Breast epithelium (tissue), 4 donors: ENCODE measurements at regions of chr4 and their contacts with region 1.

Region 1: GRCh38 chr4:144562019-144562705 is 83.8 kb upstream of the HHIP start:
- DNase-seq: no peak
- H3K4me3 ChIP-seq: no peak overlapping the region
- H3K27ac ChIP-seq: no peak overlapping the region
- H3K4me1 ChIP-seq: no peaks in the 10 kb centered on the region
- H3K27me3 ChIP-seq: no peaks in the 10 kb centered on the region
- CTCF ChIP-seq: no peak
- POLR2A ChIP-seq: no peak

Region 2: GRCh38 chr4:143035661-143036060 is 1526.5 kb before region 1 on chr4:
- intact Hi-C with region 1: loop called (anchors 10 kb)
- DNase-seq: no peak
- H3K4me3 ChIP-seq: no peak overlapping the region
- H3K27ac ChIP-seq: no peak overlapping the region
- H3K4me1 ChIP-seq: no peaks in the 10 kb centered on the region
- H3K27me3 ChIP-seq: no peaks in the 10 kb centered on the region
- CTCF ChIP-seq: no peak
- POLR2A ChIP-seq: no peak

Region 3: GRCh38 chr4:144518181-144518902 is 43.8 kb before region 1 on chr4:
- intact Hi-C with region 1: loop called (anchors 2 kb)
- DNase-seq: no peak
- H3K4me3 ChIP-seq: no peak overlapping the region
- H3K27ac ChIP-seq: no peak overlapping the region
- H3K4me1 ChIP-seq: no peaks in the 10 kb centered on the region
- H3K27me3 ChIP-seq: no peaks in the 10 kb centered on the region
- CTCF ChIP-seq: no peak
- POLR2A ChIP-seq: no peak

Region 4: DNA sequence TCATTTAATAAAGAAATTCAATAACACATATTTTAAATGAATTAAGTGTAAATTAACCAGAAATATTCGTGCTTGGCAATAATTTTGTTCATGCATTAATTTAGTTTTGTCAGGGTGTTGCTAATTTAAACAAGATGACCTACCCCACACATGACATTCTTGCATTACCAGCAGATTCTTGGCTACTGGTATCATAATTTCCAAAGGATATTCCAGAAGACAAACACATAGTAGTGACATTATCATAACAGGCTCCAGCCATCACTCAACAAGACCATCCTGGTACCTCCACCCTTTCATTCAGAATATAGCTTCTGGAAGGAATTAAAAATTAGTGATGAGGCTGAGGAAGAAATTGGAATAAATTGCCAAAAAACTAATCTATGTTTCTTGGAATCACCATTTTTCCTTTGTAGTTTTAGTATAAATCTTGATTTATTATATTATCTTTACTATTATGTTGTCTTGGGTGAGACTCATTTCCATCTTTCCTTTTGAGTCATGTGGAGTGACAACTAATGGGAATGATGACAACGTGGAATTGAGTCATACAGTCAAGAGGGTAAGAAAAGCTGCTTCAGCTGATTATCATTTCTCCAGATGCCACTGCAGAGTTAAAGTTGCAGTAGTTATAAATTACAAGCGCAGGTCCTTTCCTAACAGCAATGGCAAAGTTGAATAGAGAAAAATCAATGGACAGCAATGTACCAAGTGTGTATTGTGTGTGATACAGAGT is 52.9 kb after region 1 on chr4:
- intact Hi-C with region 1: loop called (anchors 2 kb)
- DNase-seq: no peak
- H3K4me3 ChIP-seq: no peak overlapping the region
- H3K27ac ChIP-seq: no peak overlapping the region
- H3K4me1 ChIP-seq: no peaks in the 10 kb centered on the region
- H3K27me3 ChIP-seq: no peaks in the 10 kb centered on the region
- CTCF ChIP-seq: no peak
- POLR2A ChIP-seq: no peak

Region 5: GRCh38 chr4:145034727-145035211 is 472.6 kb after region 1 on chr4:
- intact Hi-C with region 1: no loop called
- DNase-seq: no peak
- H3K4me3 ChIP-seq: no peak overlapping the region
- H3K27ac ChIP-seq: no peak overlapping the region
- H3K4me1 ChIP-seq: no peaks in the 10 kb centered on the region
- H3K27me3 ChIP-seq: no peaks in the 10 kb centered on the region
- CTCF ChIP-seq: no peak
- POLR2A ChIP-seq: no peak

Region 6: DNA sequence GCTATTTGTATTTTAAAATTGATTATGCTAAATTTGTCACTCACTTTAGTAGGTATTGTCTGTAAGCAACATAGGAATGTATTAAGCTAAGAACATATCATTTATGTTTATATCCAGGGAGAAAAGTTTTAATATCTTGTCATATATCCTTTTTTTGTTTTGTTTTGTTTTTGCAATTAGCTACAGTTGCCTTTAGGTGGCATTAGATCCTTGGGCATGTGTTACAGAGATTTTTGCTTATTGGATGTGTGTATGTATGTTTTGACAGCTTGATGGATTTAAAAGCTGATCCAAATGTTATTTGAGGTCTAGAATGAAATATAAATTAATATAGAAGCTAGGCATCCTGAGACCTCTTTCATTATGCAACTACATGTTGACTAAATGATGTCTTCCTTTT is 654.4 kb after region 1 on chr4:
- intact Hi-C with region 1: loop called (anchors 5 kb)
- DNase-seq: no peak
- H3K4me3 ChIP-seq: no peak overlapping the region
- H3K27ac ChIP-seq: no peak overlapping the region
- H3K4me1 ChIP-seq: no peaks in the 10 kb centered on the region
- H3K27me3 ChIP-seq: no peaks in the 10 kb centered on the region
- CTCF ChIP-seq: peak in 2 of 3 donors; percentile 34 to 38
- POLR2A ChIP-seq: no peak